PC-3 (cell line): ENCODE measurements at regions of chr20 and their contacts with region 1.

Region 1: DNA sequence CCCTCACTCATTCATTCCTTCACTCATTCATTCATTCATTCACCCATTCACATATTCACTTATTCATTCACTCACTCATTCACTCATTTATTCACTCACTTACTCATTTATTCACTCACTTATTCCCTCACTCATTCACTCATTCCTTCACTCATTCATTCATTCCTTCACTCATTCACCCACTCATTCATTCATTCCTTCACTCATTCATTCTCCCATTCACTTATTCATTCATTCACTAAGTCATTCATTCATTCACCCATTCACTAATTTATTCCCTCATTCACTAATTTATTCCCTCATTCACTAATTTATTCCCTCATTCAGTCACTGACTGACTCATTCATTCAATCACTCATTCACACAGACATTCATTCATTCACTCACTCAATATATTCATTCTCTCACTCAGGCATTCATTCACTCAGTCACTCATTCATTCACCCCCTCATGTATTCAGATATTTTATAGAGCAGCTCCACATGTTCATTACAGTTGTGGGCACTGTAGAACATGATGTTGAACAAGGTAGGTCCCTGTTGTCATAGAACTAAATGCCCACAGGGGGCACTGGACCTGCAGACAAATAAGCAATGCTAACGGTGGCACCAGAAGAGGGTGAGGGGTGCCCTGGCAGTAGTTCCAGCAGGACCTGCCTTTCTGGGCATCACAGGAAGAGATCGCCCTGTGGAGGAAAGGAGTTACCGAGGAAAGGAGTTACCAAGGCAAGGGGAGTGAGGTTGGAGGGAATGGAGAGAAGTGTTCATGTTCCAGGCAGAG is 127.8 kb downstream of the EDN3 start:
- DNase-seq: no peak
- ATAC-seq: no peak
- H3K4me3 ChIP-seq: no peak overlapping the region
- H3K27ac ChIP-seq: no peak overlapping the region
- H3K4me1 ChIP-seq: no peaks in the 10 kb centered on the region
- H3K27me3 ChIP-seq: peaks cover 53% of the 10 kb centered on the region
- CTCF ChIP-seq: peak; percentile 51

Region 2: DNA sequence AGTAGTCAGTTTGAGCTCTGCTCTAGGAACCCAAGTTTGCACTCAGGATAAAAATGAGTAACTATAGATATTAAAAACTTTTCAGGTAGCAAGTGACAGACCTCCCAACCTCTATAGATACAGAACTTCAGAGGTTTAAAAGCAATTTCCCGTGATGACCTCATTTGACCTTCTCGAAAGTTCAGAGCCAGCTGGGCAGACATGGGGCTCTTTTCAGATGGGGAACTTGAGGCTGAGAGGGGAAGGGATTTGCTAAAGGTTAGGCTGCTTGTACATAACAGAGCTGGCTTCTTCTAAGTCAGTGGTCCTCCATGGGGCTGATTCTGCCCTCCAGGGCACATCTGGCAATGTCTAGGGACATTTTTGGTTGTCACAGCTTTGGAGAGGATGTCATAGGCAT is 323.4 kb before region 1 on chr20:
- CTCF ChIA-PET with region 1: interaction called, 10 read pairs
- POLR2A ChIA-PET with region 1: no interaction called
- intact Hi-C with region 1: no loop called
- DNase-seq: no peak
- ATAC-seq: no peak
- H3K4me3 ChIP-seq: no peak overlapping the region
- H3K27ac ChIP-seq: no peak overlapping the region
- H3K4me1 ChIP-seq: no peaks in the 10 kb centered on the region
- H3K27me3 ChIP-seq: peaks cover 75% of the 10 kb centered on the region
- CTCF ChIP-seq: no peak